T-cell (primary cell): ENCODE measurements at regions of chr12 and their contacts with region 1.

Region 1: DNA sequence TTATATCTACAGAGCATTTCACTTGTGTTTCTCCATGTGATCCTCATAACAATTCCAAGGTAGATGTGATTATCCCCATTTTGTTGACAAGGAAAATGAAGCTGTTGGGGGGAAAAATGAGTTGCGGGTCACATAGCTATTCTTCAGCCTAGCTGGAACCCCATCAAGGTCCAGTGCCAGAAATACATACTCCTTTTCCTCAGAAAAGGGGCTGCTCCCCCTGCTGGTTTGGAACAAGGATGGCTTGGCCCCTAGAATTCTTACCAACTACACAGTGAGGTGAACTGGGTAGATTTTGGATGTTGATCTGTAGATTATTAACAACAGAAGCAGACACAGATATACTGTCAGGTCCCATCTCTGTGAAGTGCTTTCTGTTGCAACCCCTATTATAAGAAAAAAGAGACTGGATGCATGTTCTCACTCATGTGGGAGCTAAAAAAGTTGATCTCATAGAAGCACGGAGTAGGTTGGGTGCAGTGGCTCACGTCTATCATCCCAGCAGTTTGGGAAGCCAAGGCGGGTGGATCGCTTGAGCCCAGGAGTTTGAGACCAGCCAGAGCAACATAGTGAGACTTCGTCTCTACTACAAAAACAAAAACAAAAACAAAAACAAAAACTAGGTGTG is 8.9 kb downstream of the IKZF4 start:
- DNase-seq: peak in 23 of 35 experiments; percentile 7 to 67 (median 33)
- ATAC-seq: peak; percentile 36 to 56 (median 44)
- H3K4me3 ChIP-seq: no peak overlapping the region
- H3K4me3 Mint-ChIP-seq: no peak overlapping the region
- H3K27ac ChIP-seq: no peak overlapping the region
- H3K27ac Mint-ChIP-seq: peak overlapping the region in 1 of 2 donors; percentile 5
- H3K4me1 ChIP-seq: peaks cover 19 to 21% of the 10 kb centered on the region in 2 experiments
- H3K4me1 Mint-ChIP-seq: peaks cover 28 to 32% (median 31%) of the 10 kb centered on the region in 3 donors
- H3K27me3 ChIP-seq: no peaks in the 10 kb centered on the region
- H3K27me3 Mint-ChIP-seq: no peaks in the 10 kb centered on the region

Region 2: GRCh38 chr12:55932551-55932910 is 97.2 kb before region 1 on chr12:
- CTCF ChIA-PET with region 1: no interaction called
- POLR2A ChIA-PET with region 1: no interaction called
- DNase-seq: peak in 34 of 35 experiments; percentile 23 to 70 (median 55)
- ATAC-seq: peak in 1 of 4 experiments; percentile 8
- H3K4me3 ChIP-seq: peak overlapping the region; percentile 88 to 93
- H3K4me3 Mint-ChIP-seq: peak overlapping the region; percentile 96 to 100 (median 97)
- H3K27ac ChIP-seq: peak overlapping the region; percentile 73
- H3K27ac Mint-ChIP-seq: peak overlapping the region; percentile 96 to 99
- H3K4me1 ChIP-seq: peaks cover 43 to 71% of the 10 kb centered on the region in 2 experiments
- H3K4me1 Mint-ChIP-seq: peaks cover 62 to 80% (median 76%) of the 10 kb centered on the region in 3 donors
- H3K27me3 ChIP-seq: no peaks in the 10 kb centered on the region
- H3K27me3 Mint-ChIP-seq: no peaks in the 10 kb centered on the region

Region 3: GRCh38 chr12:55973598-55974307 is 56.0 kb before region 1 on chr12 and contains the start of gene RAB5B:
- CTCF ChIA-PET with region 1: no interaction called
- POLR2A ChIA-PET with region 1: no interaction called
- DNase-seq: peak; percentile 92 to 100 (median 99)
- ATAC-seq: peak; percentile 91 to 93 (median 92)
- H3K4me3 ChIP-seq: peak within 1 kb of the TSS; percentile 69 to 89
- H3K4me3 Mint-ChIP-seq: no peak within 1 kb of the TSS
- H3K27ac ChIP-seq: peak within 1 kb of the TSS; percentile 70
- H3K27ac Mint-ChIP-seq: no peak within 1 kb of the TSS
- H3K4me1 ChIP-seq: peaks cover 18 to 21% of the 10 kb centered on the region in 2 experiments
- H3K4me1 Mint-ChIP-seq: peaks cover 22 to 27% (median 24%) of the 10 kb centered on the region in 3 donors
- H3K27me3 ChIP-seq: no peaks in the 10 kb centered on the region
- H3K27me3 Mint-ChIP-seq: no peaks in the 10 kb centered on the region
- total RNA-seq, gene RAB5B: 58.6 to 99.8 (median 85.7) TPM

Region 4: DNA sequence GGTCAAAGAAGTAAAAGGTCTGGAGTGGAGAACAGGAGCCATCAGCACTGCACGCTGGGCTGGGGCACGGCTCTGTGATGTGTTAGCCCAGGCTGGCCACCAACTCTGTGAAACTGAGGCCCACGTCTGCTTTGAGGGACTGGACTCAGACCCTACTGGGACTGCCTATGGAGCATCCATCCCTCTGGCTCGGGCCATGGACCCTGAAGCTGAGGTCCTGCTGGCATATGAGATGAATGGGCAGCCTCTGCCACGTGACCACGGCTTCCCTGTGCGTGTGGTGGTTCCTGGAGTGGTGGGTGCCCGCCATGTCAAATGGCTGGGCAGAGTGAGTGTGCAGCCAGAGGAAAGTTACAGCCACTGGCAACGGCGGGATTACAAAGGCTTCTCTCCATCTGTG is 25.6 kb before region 1 on chr12:
- CTCF ChIA-PET with region 1: interaction called, 3 to 15 read pairs
- POLR2A ChIA-PET with region 1: interaction called in 1 of 2 experiments, 3 read pairs
- DNase-seq: no peak
- ATAC-seq: no peak
- H3K4me3 ChIP-seq: no peak overlapping the region
- H3K4me3 Mint-ChIP-seq: no peak overlapping the region
- H3K27ac ChIP-seq: no peak overlapping the region
- H3K27ac Mint-ChIP-seq: peak overlapping the region in 1 of 2 donors; percentile 47
- H3K4me1 ChIP-seq: peaks cover 6 to 16% of the 10 kb centered on the region in 2 experiments
- H3K4me1 Mint-ChIP-seq: peaks cover 26 to 29% (median 27%) of the 10 kb centered on the region in 3 donors
- H3K27me3 ChIP-seq: peaks cover 0 to 2% of the 10 kb centered on the region in 2 experiments
- H3K27me3 Mint-ChIP-seq: no peaks in the 10 kb centered on the region